ENCODE measurements at regions of chr6 and their contacts with region 1.

Region 1: GRCh38 chr6:148548065-148548748 is 198.6 kb upstream of the UST start:
- DNase-seq: no peak
- ATAC-seq: no peak
- H3K4me3 Mint-ChIP-seq: no peak overlapping the region
- H3K27ac Mint-ChIP-seq: no peak overlapping the region
- H3K4me1 Mint-ChIP-seq: no peaks in the 10 kb centered on the region
- H3K27me3 Mint-ChIP-seq: peaks cover 18% of the 10 kb centered on the region

Region 2: DNA sequence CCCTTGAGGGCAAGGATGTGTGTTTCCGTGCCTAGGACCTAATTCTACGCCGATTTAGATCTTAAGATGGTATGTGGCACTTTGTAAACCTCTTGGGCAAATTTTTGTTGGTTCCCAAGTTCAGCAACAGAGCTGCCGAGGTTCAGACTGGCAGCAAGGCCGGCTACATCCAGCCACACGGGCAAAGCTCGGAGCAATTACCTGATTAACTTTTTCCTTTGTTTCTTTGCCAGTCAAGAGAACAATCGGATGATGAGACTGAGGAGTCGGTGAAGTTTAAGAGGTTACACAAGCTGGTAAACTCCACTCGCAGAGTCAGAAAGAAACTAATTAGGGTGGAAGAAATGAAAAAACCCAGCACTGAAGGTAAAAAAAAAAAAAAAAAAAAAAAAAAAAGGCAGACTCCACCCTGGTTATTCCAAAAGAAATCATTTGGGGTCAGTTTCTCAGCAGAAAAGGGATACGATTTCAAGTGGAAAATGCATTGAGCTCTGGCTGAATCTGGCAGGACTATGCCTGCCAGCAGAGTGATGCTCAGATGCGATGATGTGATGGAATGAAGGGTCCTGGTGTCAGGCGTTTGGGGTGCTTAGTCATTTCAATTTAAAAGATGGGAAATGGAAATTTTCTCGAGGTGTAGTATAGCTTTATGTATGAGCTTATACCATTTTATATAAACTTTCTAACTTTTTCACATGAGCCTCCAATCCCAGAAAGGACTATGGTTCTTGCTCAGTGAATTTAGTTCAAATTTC is 33.9 kb before region 1 on chr6:
- POLR2A ChIA-PET with region 1: interaction called, 10 read pairs
- DNase-seq: no peak
- ATAC-seq: no peak
- H3K4me3 Mint-ChIP-seq: no peak overlapping the region
- H3K27ac Mint-ChIP-seq: no peak overlapping the region
- H3K4me1 Mint-ChIP-seq: no peaks in the 10 kb centered on the region
- H3K27me3 Mint-ChIP-seq: peaks cover 12% of the 10 kb centered on the region

Region 3: DNA sequence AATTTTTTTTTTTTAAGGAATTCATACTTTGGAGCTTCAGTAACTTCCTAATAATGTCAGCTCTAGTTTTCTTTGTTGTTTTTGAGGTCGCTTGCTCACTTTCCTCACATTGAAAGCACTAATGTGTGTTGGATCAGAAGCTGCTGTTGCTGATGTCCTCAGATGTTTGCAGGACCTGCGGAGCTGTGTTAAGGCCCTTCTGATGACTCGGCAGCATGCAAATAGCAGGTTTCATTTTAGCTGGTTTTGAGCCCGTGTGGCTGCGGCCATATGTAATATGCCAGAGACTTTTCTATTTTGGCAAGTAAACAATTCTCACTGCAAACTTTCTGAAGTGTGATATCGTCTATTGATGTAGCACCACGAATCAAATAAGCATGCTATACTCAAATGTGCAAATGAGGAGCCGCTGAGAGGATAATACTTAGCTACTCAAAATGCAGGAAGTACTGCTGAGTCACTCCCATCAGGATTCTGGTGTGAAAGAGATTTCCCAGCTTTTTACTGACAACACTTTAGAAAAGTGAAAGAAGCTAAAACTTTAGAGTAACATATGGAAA is 17.7 kb before region 1 on chr6:
- POLR2A ChIA-PET with region 1: no interaction called
- DNase-seq: no peak
- ATAC-seq: no peak
- H3K4me3 Mint-ChIP-seq: no peak overlapping the region
- H3K27ac Mint-ChIP-seq: no peak overlapping the region
- H3K4me1 Mint-ChIP-seq: no peaks in the 10 kb centered on the region
- H3K27me3 Mint-ChIP-seq: no peaks in the 10 kb centered on the region

Region 4: DNA sequence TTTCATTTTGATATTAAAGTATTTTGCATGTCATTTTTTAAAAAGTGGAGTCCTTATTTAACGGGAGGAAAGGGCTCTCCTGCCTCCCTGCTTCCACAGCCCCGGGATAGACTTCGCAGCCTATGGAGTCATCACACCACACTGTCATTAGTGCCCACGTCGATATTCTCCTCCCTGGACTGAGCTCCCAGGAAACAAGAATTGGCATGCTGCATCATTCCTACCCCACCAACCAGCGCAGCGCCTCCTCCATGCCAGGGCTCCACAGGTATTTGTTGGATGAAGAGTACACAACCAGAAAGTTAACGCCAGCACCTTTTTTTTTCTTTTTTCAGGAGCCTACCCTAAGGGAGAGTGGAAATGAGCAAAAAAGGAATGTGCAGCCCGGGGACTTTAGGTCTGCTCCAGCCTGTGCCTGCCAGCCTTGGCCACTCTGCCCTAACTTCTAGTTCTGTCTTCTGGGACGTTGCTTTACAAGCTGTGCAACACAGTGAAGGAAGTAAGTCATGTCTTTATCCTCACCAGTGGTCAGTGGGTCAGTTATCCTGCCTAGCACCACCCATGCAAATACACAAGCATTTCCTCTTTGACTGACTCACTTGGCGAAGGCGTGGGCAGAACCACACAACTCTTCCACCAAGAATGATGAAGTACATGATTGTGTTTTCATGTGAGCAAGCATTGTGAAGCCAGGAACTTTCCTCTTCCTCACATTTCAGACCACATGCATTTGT is 17.9 kb after region 1 on chr6:
- POLR2A ChIA-PET with region 1: no interaction called
- DNase-seq: no peak
- ATAC-seq: no peak
- H3K4me3 Mint-ChIP-seq: no peak overlapping the region
- H3K27ac Mint-ChIP-seq: no peak overlapping the region
- H3K4me1 Mint-ChIP-seq: peaks cover 2% of the 10 kb centered on the region
- H3K27me3 Mint-ChIP-seq: peaks cover 27% of the 10 kb centered on the region

Region 5: DNA sequence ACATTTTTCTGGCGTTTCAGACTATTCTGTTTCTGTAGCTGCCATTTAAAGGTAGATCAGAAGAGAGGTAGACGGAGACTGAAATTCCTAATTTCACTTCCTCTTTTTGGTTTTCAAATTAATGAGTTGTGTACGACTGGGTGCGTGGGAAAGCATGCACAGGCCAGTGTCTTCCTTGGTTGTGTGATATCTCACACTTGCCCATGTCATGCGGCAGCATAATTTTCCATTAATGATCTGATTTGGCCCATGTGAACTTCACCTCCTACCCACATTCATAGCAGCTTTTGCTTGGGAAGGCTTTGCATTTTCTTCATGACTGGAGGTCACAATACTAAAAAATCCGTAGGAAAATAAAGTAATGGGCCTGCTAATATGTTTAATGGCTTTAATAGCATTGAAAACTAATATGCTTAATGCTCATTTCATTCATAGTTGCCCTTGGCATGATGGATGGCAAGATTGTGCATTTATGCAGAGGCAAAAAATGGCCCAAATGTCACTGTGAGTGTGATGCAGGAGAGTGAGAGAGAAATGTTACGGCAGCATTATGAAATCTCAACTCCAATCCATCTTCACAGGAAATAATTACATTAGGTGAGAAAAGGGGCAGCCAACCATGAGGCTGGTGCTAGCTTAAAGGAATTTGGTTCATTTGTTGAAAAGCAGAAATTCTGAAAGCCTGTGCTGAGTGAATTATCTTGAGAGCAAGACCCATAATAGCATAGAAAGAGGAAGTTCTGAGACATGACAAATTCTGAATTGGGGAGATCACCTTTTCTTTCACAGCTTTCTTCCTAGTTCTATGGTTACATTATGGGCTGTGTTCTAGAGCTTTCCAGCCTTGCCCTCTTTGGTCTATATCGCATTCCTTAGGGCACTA is 129.6 kb after region 1 on chr6:
- POLR2A ChIA-PET with region 1: no interaction called
- DNase-seq: no peak
- ATAC-seq: no peak
- H3K4me3 Mint-ChIP-seq: no peak overlapping the region
- H3K27ac Mint-ChIP-seq: no peak overlapping the region
- H3K4me1 Mint-ChIP-seq: peaks cover 1% of the 10 kb centered on the region
- H3K27me3 Mint-ChIP-seq: peaks cover 3% of the 10 kb centered on the region